ENCODE measurements at regions of chr9 and their contacts with region 1.

Region 1: DNA sequence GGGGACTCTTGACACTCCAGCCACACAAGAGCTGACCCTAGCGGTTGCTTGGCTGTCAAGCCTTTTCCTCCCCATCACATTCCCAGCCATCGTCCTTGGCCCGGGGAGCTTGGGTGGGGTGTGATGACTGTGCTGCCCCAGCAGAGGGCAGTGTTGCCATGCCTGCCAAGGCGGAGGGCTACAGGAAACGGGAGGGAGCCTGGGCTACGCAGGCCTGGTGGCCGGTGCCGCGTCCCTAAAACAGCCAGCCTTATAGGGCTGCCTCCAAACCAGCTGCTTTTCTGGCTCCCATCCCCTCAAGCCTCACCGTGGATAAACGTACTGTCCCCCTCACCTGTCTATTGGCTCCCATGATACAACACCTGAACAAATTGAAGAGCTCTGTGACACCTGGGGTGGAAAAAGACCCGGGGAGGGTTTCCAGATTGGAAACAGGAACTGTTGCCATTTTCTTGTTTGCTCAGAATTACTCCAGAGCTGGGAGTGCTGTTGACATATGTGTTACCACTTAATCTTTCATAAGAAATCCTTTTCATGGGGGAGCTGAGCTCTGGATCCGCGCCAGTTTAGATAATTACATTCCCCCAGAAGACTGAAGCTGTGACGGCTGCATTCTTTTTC is 72.8 kb upstream of the ASTN2 start:
- DNase-seq: peak; percentile 62 to 93 (median 84)

Region 2: GRCh38 chr9:117546894-117547678 is 59.4 kb after region 1 on chr9:
- intact Hi-C with region 1: loop called (anchors 5 kb)
- DNase-seq: no peak

Measured in head of caudate nucleus (tissue), 42 donors.